ENCODE measurements at regions of chrX and their contacts with region 1.

Region 1: DNA sequence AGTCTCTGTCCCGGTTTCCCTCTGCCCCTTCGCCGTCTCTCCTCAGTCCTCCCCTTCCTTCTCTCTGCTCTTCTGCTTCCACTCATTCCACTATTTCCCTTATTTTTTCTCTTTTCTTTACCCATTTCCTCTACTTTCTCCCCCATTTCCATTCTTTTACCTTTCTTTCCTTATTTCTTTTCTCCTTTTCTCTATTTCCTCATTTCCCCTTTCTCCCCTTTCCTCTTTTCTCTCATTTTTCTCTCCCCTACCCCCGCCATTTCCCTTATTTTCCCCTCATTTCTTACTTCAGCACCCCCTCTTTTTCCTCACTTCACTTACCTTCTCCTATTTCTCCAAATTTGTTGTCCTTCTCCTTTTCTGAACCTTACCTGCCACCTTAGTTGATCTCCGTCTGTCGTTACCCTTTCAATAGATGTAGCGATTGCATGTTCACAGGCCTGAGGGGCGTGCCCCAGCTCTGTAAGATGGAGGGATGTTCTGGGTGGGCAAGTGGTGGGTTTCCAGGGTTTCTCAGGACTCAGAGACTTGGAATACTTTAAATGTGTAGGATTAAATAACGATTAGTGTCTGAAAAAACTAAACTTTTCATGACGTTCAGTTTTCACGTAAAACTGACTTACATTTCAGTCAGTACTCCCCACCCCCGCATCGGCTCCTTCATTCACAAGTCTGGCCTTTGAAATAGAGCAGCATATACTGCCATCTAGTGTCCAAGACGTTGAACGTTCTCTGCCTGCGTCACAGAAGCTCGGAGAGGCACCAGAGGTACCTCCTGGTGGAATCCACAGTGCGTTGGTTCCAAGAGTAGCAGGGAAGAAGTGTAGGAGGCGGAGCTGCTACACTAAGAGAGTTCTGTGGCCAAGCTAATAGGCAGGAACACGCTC is 641 bp upstream of the NCBP2L start:
- DNase-seq: peak; percentile 51 to 81
- ATAC-seq: peak; percentile 71 to 84 (median 79)
- H3K4me3 ChIP-seq: peak overlapping the region in 9 of 10 donors; percentile 53 to 69 (median 65)
- H3K27ac ChIP-seq: peak overlapping the region; percentile 65 to 89 (median 84)
- H3K4me1 ChIP-seq: peaks cover 0 to 26% (median 7%) of the 10 kb centered on the region in 9 donors
- H3K27me3 ChIP-seq: peaks cover 0 to 51% (median 0%) of the 10 kb centered on the region in 7 donors
- CTCF ChIP-seq: peak; percentile 30 to 79 (median 73)

Region 2: DNA sequence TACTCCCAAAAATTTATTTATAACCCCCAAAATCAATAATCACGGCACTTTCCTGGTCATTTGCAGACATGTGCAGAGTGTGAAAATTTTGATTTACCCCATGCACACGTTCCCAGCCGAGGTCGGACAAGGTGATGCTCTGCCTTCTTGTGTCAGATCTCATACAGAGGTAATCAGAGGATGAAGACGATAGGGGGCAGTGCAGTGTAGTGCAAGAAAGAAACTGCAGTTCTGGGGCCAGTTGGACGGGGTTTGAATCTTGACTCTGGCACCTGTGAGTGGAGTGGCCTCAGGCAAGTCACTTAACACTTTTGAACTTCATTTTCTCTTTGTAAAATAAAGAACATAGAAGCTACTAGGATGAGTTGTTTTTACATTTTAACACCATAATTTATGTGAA is 239.1 kb before region 1 on chrX:
- intact Hi-C with region 1: loop called in 1 of 10 experiments (anchors 5 kb)
- DNase-seq: peak in 1 of 2 donors; percentile 10
- ATAC-seq: no peak
- H3K4me3 ChIP-seq: no peak overlapping the region
- H3K27ac ChIP-seq: no peak overlapping the region
- H3K4me1 ChIP-seq: no peaks in the 10 kb centered on the region
- H3K27me3 ChIP-seq: peaks cover 0 to 52% (median 0%) of the 10 kb centered on the region in 7 donors
- CTCF ChIP-seq: peak in 7 of 9 donors; percentile 35 to 57 (median 39)

Region 3: DNA sequence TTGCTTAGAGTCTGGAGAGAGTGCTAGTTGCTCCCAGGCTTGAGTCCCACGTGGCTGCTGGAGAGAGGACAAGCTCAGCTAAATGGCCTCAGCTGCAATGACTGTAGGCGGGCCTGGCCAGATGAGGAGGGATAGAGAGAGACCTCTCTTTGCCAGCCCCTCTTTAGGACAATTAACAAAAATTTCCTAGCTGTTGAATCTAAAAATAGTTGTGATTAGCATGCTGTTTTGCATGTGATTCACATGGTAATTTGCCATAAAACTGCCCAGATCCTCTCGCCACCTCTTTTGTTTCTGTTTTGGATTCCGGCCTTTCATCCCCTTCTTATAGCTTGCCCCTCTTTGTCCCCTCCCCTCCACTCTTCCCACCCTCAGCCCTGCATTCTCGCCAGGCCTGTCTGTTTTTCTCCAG is 177.4 kb before region 1 on chrX:
- intact Hi-C with region 1: no loop called
- DNase-seq: no peak
- ATAC-seq: no peak
- H3K4me3 ChIP-seq: no peak overlapping the region
- H3K27ac ChIP-seq: no peak overlapping the region
- H3K4me1 ChIP-seq: no peaks in the 10 kb centered on the region
- H3K27me3 ChIP-seq: peaks cover 0 to 17% (median 0%) of the 10 kb centered on the region in 7 donors
- CTCF ChIP-seq: no peak

Region 4: GRCh38 chrX:107654872-107655761 is 121.8 kb before region 1 on chrX:
- intact Hi-C with region 1: loop called (anchors 1 to 5 kb)
- DNase-seq: peak; percentile 50 to 53
- ATAC-seq: peak; percentile 66 to 91 (median 80)
- H3K4me3 ChIP-seq: peak overlapping the region in 1 of 10 donors; percentile 18
- H3K27ac ChIP-seq: peak overlapping the region in 3 of 10 donors; percentile 6 to 41 (median 15)
- H3K4me1 ChIP-seq: peaks cover 0 to 20% (median 0%) of the 10 kb centered on the region in 9 donors
- H3K27me3 ChIP-seq: peaks cover 0 to 30% (median 0%) of the 10 kb centered on the region in 7 donors
- CTCF ChIP-seq: peak; percentile 18 to 79 (median 66)

Region 5: GRCh38 chrX:107672955-107673378 is 103.9 kb before region 1 on chrX:
- intact Hi-C with region 1: loop called in 6 of 10 experiments (anchors 1 to 5 kb)
- DNase-seq: peak; percentile 72 to 74
- ATAC-seq: peak; percentile 22 to 62 (median 40)
- H3K4me3 ChIP-seq: peak overlapping the region in 1 of 10 donors; percentile 12
- H3K27ac ChIP-seq: peak overlapping the region; percentile 74 to 92 (median 89)
- H3K4me1 ChIP-seq: peaks cover 0 to 60% (median 36%) of the 10 kb centered on the region in 9 donors
- H3K27me3 ChIP-seq: peaks cover 0 to 51% (median 0%) of the 10 kb centered on the region in 7 donors
- CTCF ChIP-seq: peak; percentile 39 to 70 (median 63)

Region 6: GRCh38 chrX:107716816-107717700 is 59.8 kb before region 1 on chrX:
- intact Hi-C with region 1: loop called in 9 of 10 experiments (anchors 2 to 10 kb)
- DNase-seq: peak; percentile 81 to 90
- ATAC-seq: peak; percentile 81 to 90 (median 87)
- H3K4me3 ChIP-seq: peak overlapping the region; percentile 42 to 81 (median 74)
- H3K27ac ChIP-seq: peak overlapping the region; percentile 81 to 99 (median 95)
- H3K4me1 ChIP-seq: peaks cover 3 to 61% (median 31%) of the 10 kb centered on the region in 9 donors
- H3K27me3 ChIP-seq: peaks cover 0 to 23% (median 0%) of the 10 kb centered on the region in 7 donors
- CTCF ChIP-seq: no peak

Region 7: GRCh38 chrX:107731831-107732502 is 44.9 kb before region 1 on chrX:
- intact Hi-C with region 1: loop called in 4 of 10 experiments (anchors 5 to 10 kb)
- DNase-seq: peak; percentile 87 to 90
- ATAC-seq: peak; percentile 73 to 91 (median 86)
- H3K4me3 ChIP-seq: no peak overlapping the region
- H3K27ac ChIP-seq: peak overlapping the region; percentile 31 to 82 (median 70)
- H3K4me1 ChIP-seq: peaks cover 10 to 97% (median 62%) of the 10 kb centered on the region in 9 donors
- H3K27me3 ChIP-seq: peaks cover 0 to 18% (median 0%) of the 10 kb centered on the region in 7 donors
- CTCF ChIP-seq: no peak

Region 8: DNA sequence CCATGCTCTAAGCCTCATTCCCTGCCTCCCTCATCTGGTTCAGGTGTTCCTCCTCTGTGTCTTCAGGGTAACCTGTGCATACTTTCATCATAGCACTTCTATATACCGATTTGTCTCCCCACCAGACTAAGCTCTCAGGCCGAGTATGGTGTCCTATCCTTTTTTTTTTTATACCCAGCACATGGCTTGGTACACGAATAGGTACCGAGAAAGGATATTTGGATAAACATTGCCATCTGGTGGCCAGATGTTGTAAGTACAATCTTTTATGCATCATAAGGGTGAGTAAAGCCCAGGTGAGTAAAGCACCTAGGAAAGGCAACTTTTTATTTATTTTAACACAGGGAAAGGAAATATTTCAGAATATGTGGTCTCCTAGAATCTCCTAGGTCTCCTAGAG is 117.1 kb after region 1 on chrX:
- intact Hi-C with region 1: loop called in 6 of 10 experiments (anchors 2 to 10 kb)
- DNase-seq: peak in 1 of 2 donors; percentile 5
- ATAC-seq: peak in 5 of 8 donors; percentile 46 to 71 (median 52)
- H3K4me3 ChIP-seq: no peak overlapping the region
- H3K27ac ChIP-seq: no peak overlapping the region
- H3K4me1 ChIP-seq: no peaks in the 10 kb centered on the region
- H3K27me3 ChIP-seq: peaks cover 0 to 22% (median 0%) of the 10 kb centered on the region in 7 donors
- CTCF ChIP-seq: peak; percentile 26 to 68 (median 62)

Region 9: DNA sequence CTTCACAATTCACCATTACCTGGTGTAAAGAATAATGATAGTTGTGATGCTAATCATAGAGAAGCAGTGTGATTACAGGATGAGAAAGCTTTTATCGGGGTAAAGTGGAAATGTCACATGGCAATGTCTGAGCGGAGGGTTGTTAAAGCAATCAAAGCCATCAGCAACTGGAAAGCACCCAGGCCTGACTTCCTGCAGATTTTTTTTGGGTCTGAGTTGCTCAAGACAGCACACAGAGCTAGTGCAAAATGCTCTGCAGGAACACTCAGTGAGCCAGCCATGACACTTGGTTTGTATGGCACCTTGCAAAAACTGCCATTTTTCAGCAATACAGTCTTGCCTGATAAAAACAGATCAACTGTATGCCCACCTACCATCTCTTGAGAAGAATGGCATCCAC is 508.5 kb after region 1 on chrX:
- intact Hi-C with region 1: no loop called
- DNase-seq: no peak
- ATAC-seq: no peak
- H3K4me3 ChIP-seq: no peak overlapping the region
- H3K27ac ChIP-seq: no peak overlapping the region
- H3K4me1 ChIP-seq: peaks cover 0 to 8% (median 0%) of the 10 kb centered on the region in 9 donors
- H3K27me3 ChIP-seq: peaks cover 0 to 27% (median 0%) of the 10 kb centered on the region in 7 donors
- CTCF ChIP-seq: no peak

Region 10: GRCh38 chrX:108731153-108731552 is 954.3 kb after region 1 on chrX:
- intact Hi-C with region 1: no loop called
- DNase-seq: no peak
- ATAC-seq: no peak
- H3K4me3 ChIP-seq: no peak overlapping the region
- H3K27ac ChIP-seq: no peak overlapping the region
- H3K4me1 ChIP-seq: peaks cover 0 to 4% (median 0%) of the 10 kb centered on the region in 9 donors
- H3K27me3 ChIP-seq: peaks cover 0 to 96% (median 46%) of the 10 kb centered on the region in 7 donors
- CTCF ChIP-seq: no peak

Measured in heart right ventricle (tissue), 16 donors.